K562 (cell line): ENCODE measurements at regions of chr15 and their contacts with region 1.

Region 1: DNA sequence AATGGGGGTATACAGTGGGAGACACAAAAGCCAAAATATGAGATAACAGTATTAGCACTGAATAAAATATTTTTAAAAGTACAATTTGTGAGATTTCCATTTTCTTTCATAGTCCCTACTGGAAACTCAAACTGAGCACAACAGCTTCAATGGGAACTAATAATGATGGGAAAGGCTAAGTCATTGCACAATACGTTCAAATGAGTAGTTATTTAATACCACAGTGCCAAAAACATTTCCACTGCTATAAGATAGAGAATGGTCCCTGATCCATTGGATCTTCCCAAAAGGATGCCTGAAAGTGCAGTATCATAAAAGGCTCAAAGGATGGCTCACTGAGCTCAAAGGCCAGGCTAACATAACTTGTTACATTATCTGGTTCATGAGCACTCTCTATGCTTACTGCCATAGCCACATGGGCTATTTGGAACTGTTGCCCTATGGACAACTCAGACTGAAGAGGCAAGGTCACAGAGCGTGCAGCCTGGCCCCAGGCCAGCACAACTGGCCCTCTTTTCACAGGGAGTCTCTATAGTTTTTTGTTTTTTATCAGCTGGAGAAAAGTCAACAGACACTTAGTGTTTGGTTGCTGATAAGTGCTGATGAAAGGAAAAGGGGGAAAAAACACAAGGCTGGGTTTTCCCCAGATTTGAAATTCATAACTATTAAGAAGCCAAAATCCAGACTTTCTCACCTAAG is 54.1 kb upstream of the PPIB start:
- DNase-seq: peak; percentile 59 to 95 (median 78)
- ATAC-seq: peak; percentile 97
- H3K4me3 ChIP-seq: no peak overlapping the region
- H3K27ac ChIP-seq: peak overlapping the region; percentile 43
- H3K4me1 ChIP-seq: peaks cover 14 to 18% of the 10 kb centered on the region in 2 experiments; a peak in 3 of 5 replicates
- H3K27me3 ChIP-seq: no peaks in the 10 kb centered on the region
- CTCF ChIP-seq: peak in 1 of 3 experiments; percentile 23; a peak in 2 of 6 replicates
- EP300 ChIP-seq: peak; percentile 88
- POLR2A ChIP-seq: no peak
- RAD21 ChIP-seq: peak in 1 of 2 experiments; percentile 65; a peak in 3 of 4 replicates

Region 2: DNA sequence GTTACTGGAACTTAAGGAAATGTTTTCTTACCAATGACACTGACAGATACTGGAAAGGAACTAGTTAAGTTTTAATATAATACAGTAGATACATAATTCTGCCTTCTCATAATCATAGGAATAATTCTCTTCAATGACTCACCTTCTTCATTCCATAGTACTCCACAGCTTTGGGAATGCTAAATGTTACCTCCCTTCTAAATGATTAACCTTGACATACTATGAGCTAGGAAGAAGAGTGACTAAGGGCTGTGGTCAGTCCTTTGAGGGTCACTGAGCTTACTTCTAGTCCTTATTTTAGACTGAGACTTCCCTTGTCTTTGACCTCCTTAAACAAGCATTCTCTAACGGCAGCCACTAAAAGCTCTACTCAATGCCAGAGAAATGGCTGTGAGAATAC is 15.5 kb after region 1 on chr15:
- CTCF ChIA-PET with region 1: no interaction called
- POLR2A ChIA-PET with region 1: interaction called, 13 read pairs
- in situ Hi-C with region 1: no loop called
- intact Hi-C with region 1: no loop called
- DNase-seq: peak in 3 of 4 experiments; percentile 15 to 57 (median 17)
- ATAC-seq: peak; percentile 79
- H3K4me3 ChIP-seq: no peak overlapping the region
- H3K27ac ChIP-seq: peak overlapping the region; percentile 76
- H3K4me1 ChIP-seq: peaks cover 0 to 30% of the 10 kb centered on the region in 2 experiments
- H3K27me3 ChIP-seq: no peaks in the 10 kb centered on the region
- CTCF ChIP-seq: no peak
- EP300 ChIP-seq: no peak
- POLR2A ChIP-seq: no peak
- RAD21 ChIP-seq: no peak

Region 3: DNA sequence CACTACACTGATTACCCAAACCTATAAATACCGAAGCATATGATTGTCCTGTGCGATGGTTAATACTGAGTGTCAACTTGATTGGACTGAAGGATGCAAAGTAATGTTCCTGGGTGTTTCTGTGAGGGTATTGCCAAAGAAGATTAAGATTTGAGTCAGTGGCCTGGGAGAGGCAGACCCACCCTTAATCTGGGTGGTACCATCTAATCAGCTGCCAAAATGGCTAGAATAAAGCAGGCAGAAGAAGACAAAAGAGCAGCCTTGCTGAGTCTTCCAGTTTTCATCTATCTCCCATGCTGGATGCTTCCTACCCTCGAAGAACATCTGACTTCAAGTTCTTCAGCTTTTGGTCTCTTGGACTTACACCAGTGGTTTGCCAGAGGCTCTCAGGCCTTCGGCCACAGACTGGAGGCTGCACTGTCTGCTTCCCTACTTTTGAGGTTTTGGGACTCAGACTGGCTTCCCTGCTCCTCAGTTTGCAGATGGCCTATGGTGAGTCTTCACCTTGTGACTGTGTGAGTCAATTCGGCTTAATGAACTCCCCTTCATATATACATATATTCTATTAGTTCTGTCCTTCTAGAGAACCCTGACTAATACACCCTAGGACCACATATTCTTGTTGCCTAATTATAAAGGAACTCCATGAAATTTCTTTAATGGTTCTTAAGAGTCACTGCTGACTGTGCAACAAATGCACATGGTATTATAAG is 107.4 kb after region 1 on chr15:
- CTCF ChIA-PET with region 1: no interaction called
- POLR2A ChIA-PET with region 1: no interaction called
- in situ Hi-C with region 1: no loop called
- intact Hi-C with region 1: no loop called
- DNase-seq: no peak
- ATAC-seq: no peak
- H3K4me3 ChIP-seq: no peak overlapping the region
- H3K27ac ChIP-seq: no peak overlapping the region
- H3K4me1 ChIP-seq: no peaks in the 10 kb centered on the region
- H3K27me3 ChIP-seq: no peaks in the 10 kb centered on the region
- CTCF ChIP-seq: no peak
- EP300 ChIP-seq: no peak
- POLR2A ChIP-seq: no peak
- RAD21 ChIP-seq: no peak

Region 4: GRCh38 chr15:64355944-64356709 is 139.2 kb after region 1 on chr15 and contains the start of gene CSNK1G1:
- CTCF ChIA-PET with region 1: interaction called, 3 read pairs
- POLR2A ChIA-PET with region 1: no interaction called
- in situ Hi-C with region 1: no loop called
- intact Hi-C with region 1: loop called (anchors 1 kb)
- DNase-seq: peak; percentile 89 to 99 (median 92)
- ATAC-seq: peak; percentile 98
- H3K4me3 ChIP-seq: peak within 1 kb of the TSS; percentile 82
- H3K27ac ChIP-seq: peak within 1 kb of the TSS; percentile 77
- H3K4me1 ChIP-seq: peaks cover 7 to 13% of the 10 kb centered on the region in 2 experiments; a peak in 4 of 5 replicates
- H3K27me3 ChIP-seq: no peaks in the 10 kb centered on the region
- CTCF ChIP-seq: peak; percentile 45 to 92 (median 92); a peak in 4 of 6 replicates
- EP300 ChIP-seq: no peak
- POLR2A ChIP-seq: peak; percentile 74
- RAD21 ChIP-seq: peak; percentile 76 to 78
- polyA plus RNA-seq, gene CSNK1G1: 4.5 to 4.9 TPM